PC-3 (cell line): ENCODE measurements at regions of chr5 and their contacts with region 1.

Region 1: GRCh38 chr5:80083101-80083890 is 48.1 kb downstream of the THBS4 start:
- DNase-seq: peak; percentile 76
- ATAC-seq: peak; percentile 87
- H3K4me3 ChIP-seq: peak overlapping the region; percentile 62
- H3K27ac ChIP-seq: no peak overlapping the region
- H3K4me1 ChIP-seq: no peaks in the 10 kb centered on the region; the same call in 1 of the 2 replicates
- H3K27me3 ChIP-seq: no peaks in the 10 kb centered on the region
- CTCF ChIP-seq: peak; percentile 73

Region 2: GRCh38 chr5:79256579-79256978 is 826.7 kb before region 1 on chr5:
- CTCF ChIA-PET with region 1: interaction called, 15 read pairs
- POLR2A ChIA-PET with region 1: no interaction called
- intact Hi-C with region 1: no loop called
- DNase-seq: peak; percentile 6
- ATAC-seq: no peak
- H3K4me3 ChIP-seq: no peak overlapping the region
- H3K27ac ChIP-seq: no peak overlapping the region
- H3K4me1 ChIP-seq: peaks cover 7% of the 10 kb centered on the region; the same call in 1 of the 2 replicates
- H3K27me3 ChIP-seq: no peaks in the 10 kb centered on the region
- CTCF ChIP-seq: no peak

Region 3: GRCh38 chr5:79689541-79690466 is 393.5 kb before region 1 on chr5 and contains the start of gene CMYA5:
- CTCF ChIA-PET with region 1: no interaction called
- POLR2A ChIA-PET with region 1: no interaction called
- intact Hi-C with region 1: loop called (anchors 10 kb)
- DNase-seq: no peak
- ATAC-seq: peak; percentile 29; the same call in 1 of the 2 replicates
- H3K4me3 ChIP-seq: no peak within 1 kb of the TSS
- H3K27ac ChIP-seq: no peak within 1 kb of the TSS
- H3K4me1 ChIP-seq: no peaks in the 10 kb centered on the region
- H3K27me3 ChIP-seq: no peaks in the 10 kb centered on the region
- CTCF ChIP-seq: no peak
- total RNA-seq, gene CMYA5: under 0.01 and 0.15 TPM in 2 replicates

Region 4: GRCh38 chr5:79924936-79925893 is 158.1 kb before region 1 on chr5:
- CTCF ChIA-PET with region 1: interaction called, 4 read pairs
- POLR2A ChIA-PET with region 1: no interaction called
- intact Hi-C with region 1: loop called (anchors 2 kb)
- DNase-seq: peak; percentile 43
- ATAC-seq: peak; percentile 64; the same call in 1 of the 2 replicates
- H3K4me3 ChIP-seq: no peak overlapping the region
- H3K27ac ChIP-seq: no peak overlapping the region
- H3K4me1 ChIP-seq: no peaks in the 10 kb centered on the region
- H3K27me3 ChIP-seq: peaks cover 26% of the 10 kb centered on the region
- CTCF ChIP-seq: peak; percentile 60

Region 5: DNA sequence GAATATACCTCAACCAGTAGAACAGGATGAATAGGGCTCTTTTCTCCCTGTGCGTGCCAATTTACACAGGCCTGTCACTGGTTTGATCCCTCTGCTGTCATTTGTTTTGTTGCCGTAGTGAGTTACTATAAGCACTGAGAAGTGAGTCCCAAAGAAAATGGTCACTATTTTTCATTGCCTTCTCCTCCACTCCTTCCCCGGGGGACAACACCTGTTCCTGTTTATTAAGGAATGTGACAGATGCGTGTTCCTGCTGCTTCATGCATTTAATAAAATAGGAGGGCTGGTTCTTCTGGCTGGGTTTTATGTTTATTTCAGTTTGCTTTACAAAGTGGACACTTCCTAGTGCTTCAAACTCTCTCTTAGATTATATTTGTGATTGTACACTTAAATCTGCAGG is 41.8 kb before region 1 on chr5:
- CTCF ChIA-PET with region 1: interaction called, 18 read pairs
- POLR2A ChIA-PET with region 1: no interaction called
- intact Hi-C with region 1: no loop called
- DNase-seq: no peak
- ATAC-seq: no peak
- H3K4me3 ChIP-seq: no peak overlapping the region
- H3K27ac ChIP-seq: no peak overlapping the region
- H3K4me1 ChIP-seq: no peaks in the 10 kb centered on the region
- H3K27me3 ChIP-seq: peaks cover 65% of the 10 kb centered on the region
- CTCF ChIP-seq: no peak

Region 6: GRCh38 chr5:80101993-80102392 is 18.7 kb after region 1 on chr5:
- CTCF ChIA-PET with region 1: no interaction called
- POLR2A ChIA-PET with region 1: no interaction called
- intact Hi-C with region 1: no loop called
- DNase-seq: no peak
- ATAC-seq: no peak
- H3K4me3 ChIP-seq: no peak overlapping the region
- H3K27ac ChIP-seq: no peak overlapping the region
- H3K4me1 ChIP-seq: no peaks in the 10 kb centered on the region
- H3K27me3 ChIP-seq: no peaks in the 10 kb centered on the region
- CTCF ChIP-seq: no peak